GM12878 (cell line): ENCODE measurements at regions of chr17 and their contacts with region 1.

Region 1: GRCh38 chr17:50626037-50626574 is 8.6 kb upstream of the ABCC3 start:
- DNase-seq: no peak
- ATAC-seq: peak; percentile 90
- H3K4me3 ChIP-seq: no peak overlapping the region
- H3K27ac ChIP-seq: no peak overlapping the region
- H3K4me1 ChIP-seq: no peaks in the 10 kb centered on the region
- H3K27me3 ChIP-seq: peaks cover 0 to 1% of the 10 kb centered on the region in 2 experiments; a peak in 2 of 4 replicates
- CTCF ChIP-seq: peak; percentile 57 to 83 (median 73)
- EP300 ChIP-seq: no peak
- POLR2A ChIP-seq: no peak
- RAD21 ChIP-seq: peak; percentile 73

Region 2: DNA sequence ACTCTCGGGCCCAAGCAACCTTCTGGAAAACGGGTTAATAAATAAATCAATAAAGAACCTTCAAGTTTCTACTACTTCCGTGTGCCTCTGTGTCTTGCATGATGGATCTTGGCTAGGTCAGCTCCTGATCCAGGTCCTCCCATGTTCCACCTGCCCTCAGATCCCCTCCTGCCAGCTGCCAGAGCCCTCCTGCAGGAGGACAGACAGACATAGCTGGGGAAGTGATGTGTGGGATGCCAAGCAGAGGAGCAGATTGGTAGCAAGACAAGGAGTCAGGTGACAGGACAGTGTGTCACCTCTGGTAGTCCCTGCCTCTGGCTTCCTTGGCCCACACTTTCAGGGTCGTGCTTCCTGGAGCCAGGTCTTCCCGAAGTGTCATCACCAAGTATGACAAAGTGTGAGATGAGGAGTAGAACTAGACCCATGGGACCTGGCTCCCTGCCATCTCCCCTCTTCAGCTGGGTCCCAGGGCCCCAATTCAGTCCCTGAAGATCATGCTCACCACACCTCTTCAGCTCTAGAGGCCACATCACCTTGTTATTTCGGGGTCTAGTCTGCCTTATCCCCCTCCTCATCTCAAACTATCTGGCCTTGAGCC is 94.6 kb before region 1 on chr17:
- CTCF ChIA-PET with region 1: no interaction called
- POLR2A ChIA-PET with region 1: no interaction called
- RAD21 ChIA-PET with region 1: no interaction called
- SMC1A ChIA-PET with region 1: no interaction called
- in situ Hi-C with region 1: no loop called
- intact Hi-C with region 1: no loop called
- DNase-seq: no peak
- ATAC-seq: no peak
- H3K4me3 ChIP-seq: no peak overlapping the region
- H3K27ac ChIP-seq: no peak overlapping the region
- H3K4me1 ChIP-seq: no peaks in the 10 kb centered on the region
- H3K27me3 ChIP-seq: peaks cover 17 to 19% of the 10 kb centered on the region in 2 experiments
- CTCF ChIP-seq: no peak
- EP300 ChIP-seq: no peak
- POLR2A ChIP-seq: no peak
- RAD21 ChIP-seq: no peak

Region 3: GRCh38 chr17:50541716-50542688 is 84.1 kb before region 1 on chr17:
- CTCF ChIA-PET with region 1: interaction called, 12 read pairs
- POLR2A ChIA-PET with region 1: interaction called, 3 read pairs
- RAD21 ChIA-PET with region 1: interaction called, 4 read pairs
- SMC1A ChIA-PET with region 1: no interaction called
- in situ Hi-C with region 1: loop called (anchors 5 kb)
- intact Hi-C with region 1: loop called (anchors 1 kb)
- DNase-seq: no peak
- ATAC-seq: peak; percentile 92
- H3K4me3 ChIP-seq: peak overlapping the region; percentile 55
- H3K27ac ChIP-seq: no peak overlapping the region
- H3K4me1 ChIP-seq: peaks cover 10% of the 10 kb centered on the region
- H3K27me3 ChIP-seq: no peaks in the 10 kb centered on the region
- CTCF ChIP-seq: peak; percentile 18 to 39 (median 26); a peak in 3 of 6 replicates
- EP300 ChIP-seq: no peak
- POLR2A ChIP-seq: peak; percentile 61
- RAD21 ChIP-seq: no peak

Region 4: DNA sequence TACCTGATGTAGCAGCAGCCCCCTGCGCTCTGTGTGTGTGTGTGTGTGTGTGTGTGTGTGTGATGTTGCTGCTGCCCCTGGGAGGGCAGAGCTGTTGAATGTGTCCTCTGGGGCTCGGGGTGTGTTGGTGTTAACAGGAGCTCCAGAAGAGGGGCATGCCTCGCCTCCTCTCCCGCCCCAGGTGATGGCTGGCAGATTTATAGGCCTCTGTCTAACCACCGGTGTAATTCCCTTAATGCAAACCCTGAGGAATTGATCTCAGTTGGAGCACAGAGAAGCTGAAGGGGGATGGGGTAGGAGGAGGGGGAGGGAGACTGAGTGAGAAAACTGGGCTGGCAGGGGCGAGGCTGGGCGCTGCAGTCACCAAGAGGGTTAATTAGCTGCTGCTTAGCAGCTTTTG is 55.6 kb before region 1 on chr17:
- CTCF ChIA-PET with region 1: no interaction called
- POLR2A ChIA-PET with region 1: interaction called, 10 read pairs
- RAD21 ChIA-PET with region 1: no interaction called
- SMC1A ChIA-PET with region 1: no interaction called
- in situ Hi-C with region 1: no loop called
- intact Hi-C with region 1: no loop called
- DNase-seq: no peak
- ATAC-seq: no peak
- H3K4me3 ChIP-seq: no peak overlapping the region
- H3K27ac ChIP-seq: no peak overlapping the region
- H3K4me1 ChIP-seq: no peaks in the 10 kb centered on the region
- H3K27me3 ChIP-seq: no peaks in the 10 kb centered on the region; a peak in 4 of 4 replicates
- CTCF ChIP-seq: no peak
- EP300 ChIP-seq: no peak
- POLR2A ChIP-seq: no peak
- RAD21 ChIP-seq: no peak

Region 5: GRCh38 chr17:50638851-50639767 is 13.0 kb after region 1 on chr17:
- CTCF ChIA-PET with region 1: interaction called, 70 read pairs
- POLR2A ChIA-PET with region 1: interaction called, 3 read pairs
- RAD21 ChIA-PET with region 1: interaction called, 4 read pairs
- SMC1A ChIA-PET with region 1: interaction called, 4 read pairs
- in situ Hi-C with region 1: no loop called
- intact Hi-C with region 1: no loop called
- DNase-seq: no peak
- ATAC-seq: peak; percentile 9; the same call in 1 of the 3 replicates
- H3K4me3 ChIP-seq: no peak overlapping the region
- H3K27ac ChIP-seq: no peak overlapping the region
- H3K4me1 ChIP-seq: peaks cover 4% of the 10 kb centered on the region; the same call in 1 of the 2 replicates
- H3K27me3 ChIP-seq: no peaks in the 10 kb centered on the region; a peak in 2 of 4 replicates
- CTCF ChIP-seq: no peak
- EP300 ChIP-seq: no peak
- POLR2A ChIP-seq: no peak
- RAD21 ChIP-seq: no peak

Region 6: DNA sequence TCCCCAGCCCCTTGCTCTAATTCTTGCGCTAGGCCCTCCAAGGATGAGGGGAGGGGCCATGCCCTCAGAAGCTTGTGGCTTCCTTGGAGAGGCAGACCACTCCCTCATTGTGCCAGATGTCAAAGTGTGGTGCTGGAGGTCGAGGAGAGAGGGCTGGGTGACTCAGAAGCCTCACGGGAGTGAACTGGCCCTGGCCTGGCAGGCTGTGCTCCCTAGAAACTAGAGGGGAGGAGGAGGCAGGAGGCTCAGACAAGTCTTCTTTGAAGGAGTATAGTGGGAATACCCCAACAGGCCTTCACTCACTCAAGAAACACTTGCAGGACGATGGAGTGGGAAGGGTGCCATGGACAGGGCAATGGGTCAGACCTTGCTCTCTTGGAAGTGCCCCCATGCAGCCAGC is 63.1 kb after region 1 on chr17:
- CTCF ChIA-PET with region 1: interaction called, 211 read pairs
- POLR2A ChIA-PET with region 1: interaction called, 5 read pairs
- RAD21 ChIA-PET with region 1: interaction called, 34 read pairs
- SMC1A ChIA-PET with region 1: interaction called, 90 read pairs
- in situ Hi-C with region 1: no loop called
- intact Hi-C with region 1: no loop called
- DNase-seq: no peak
- ATAC-seq: no peak
- H3K4me3 ChIP-seq: no peak overlapping the region
- H3K27ac ChIP-seq: no peak overlapping the region
- H3K4me1 ChIP-seq: no peaks in the 10 kb centered on the region
- H3K27me3 ChIP-seq: no peaks in the 10 kb centered on the region
- CTCF ChIP-seq: no peak
- EP300 ChIP-seq: no peak
- POLR2A ChIP-seq: no peak
- RAD21 ChIP-seq: no peak

Region 7: GRCh38 chr17:50707289-50708049 is 81.4 kb after region 1 on chr17 and contains the start of gene ANKRD40:
- CTCF ChIA-PET with region 1: interaction called, 12 read pairs
- POLR2A ChIA-PET with region 1: no interaction called
- RAD21 ChIA-PET with region 1: interaction called, 6 read pairs
- SMC1A ChIA-PET with region 1: interaction called, 9 read pairs
- in situ Hi-C with region 1: no loop called
- intact Hi-C with region 1: no loop called
- DNase-seq: peak; percentile 67
- ATAC-seq: peak; percentile 78
- H3K4me3 ChIP-seq: peak within 1 kb of the TSS; percentile 81
- H3K27ac ChIP-seq: peak within 1 kb of the TSS; percentile 86
- H3K4me1 ChIP-seq: peaks cover 9% of the 10 kb centered on the region
- H3K27me3 ChIP-seq: no peaks in the 10 kb centered on the region
- CTCF ChIP-seq: no peak
- EP300 ChIP-seq: 0 out of 4 replicates have a peak, but pooled peaks of 1 of the 2 experiments have one; percentile 9
- POLR2A ChIP-seq: peak; percentile 80
- RAD21 ChIP-seq: no peak
- polyA plus RNA-seq, gene ANKRD40: 6.7 to 6.9 TPM